A549 (cell line): ENCODE measurements at regions of chr12 and their contacts with region 1.

Region 1: GRCh38 chr12:62793256-62794217 is 141.4 kb downstream of the PPM1H start:
- DNase-seq: peak; percentile 84 to 96
- ATAC-seq: peak; percentile 93 to 96
- H3K4me3 ChIP-seq: 0 out of 3 replicates have a peak overlapping the region, but pooled peaks have one; percentile 2
- H3K27ac ChIP-seq: peak overlapping the region; percentile 91 to 94
- H3K4me1 ChIP-seq: peaks cover 42% of the 10 kb centered on the region
- CTCF ChIP-seq: peak; percentile 98
- EP300 ChIP-seq: peak in 1 of 2 experiments; percentile 37; a peak in 2 of 5 replicates
- POLR2A ChIP-seq: no peak
- RAD21 ChIP-seq: peak; percentile 99 to 100

Region 2: GRCh38 chr12:62522984-62523383 is 270.6 kb before region 1 on chr12:
- CTCF ChIA-PET with region 1: interaction called, 14 read pairs
- POLR2A ChIA-PET with region 1: no interaction called
- DNase-seq: peak in 1 of 2 experiments; percentile 48
- ATAC-seq: peak; percentile 62 to 66; a peak in 5 of 6 replicates
- H3K4me3 ChIP-seq: no peak overlapping the region
- H3K27ac ChIP-seq: no peak overlapping the region
- H3K4me1 ChIP-seq: peaks cover 45% of the 10 kb centered on the region
- CTCF ChIP-seq: peak; percentile 47
- EP300 ChIP-seq: no peak
- POLR2A ChIP-seq: no peak
- RAD21 ChIP-seq: peak; percentile 52 to 63

Region 3: DNA sequence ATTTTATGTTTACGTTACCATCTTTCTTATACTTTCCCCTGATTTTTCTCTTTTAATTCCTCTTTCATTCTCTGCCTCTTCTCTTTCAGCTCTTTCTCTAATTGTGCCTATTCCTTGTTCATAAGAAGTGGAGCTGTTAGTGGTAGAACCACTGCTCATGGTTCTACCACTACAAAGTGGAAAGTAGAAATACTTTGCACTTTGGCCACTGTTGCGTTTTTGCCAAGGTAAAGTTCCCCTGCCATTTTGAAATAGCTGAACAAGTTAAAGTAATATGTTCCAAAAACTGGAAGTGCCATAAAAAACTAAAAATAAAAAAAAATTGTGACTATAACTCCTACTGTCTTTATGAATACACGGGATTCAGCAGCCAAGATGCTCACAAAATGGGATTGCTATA is 196.3 kb before region 1 on chr12:
- CTCF ChIA-PET with region 1: interaction called, 23 read pairs
- POLR2A ChIA-PET with region 1: no interaction called
- DNase-seq: no peak
- ATAC-seq: no peak
- H3K4me3 ChIP-seq: no peak overlapping the region
- H3K27ac ChIP-seq: no peak overlapping the region
- H3K4me1 ChIP-seq: peaks cover 29% of the 10 kb centered on the region
- CTCF ChIP-seq: no peak
- EP300 ChIP-seq: no peak
- POLR2A ChIP-seq: no peak
- RAD21 ChIP-seq: no peak

Region 4: DNA sequence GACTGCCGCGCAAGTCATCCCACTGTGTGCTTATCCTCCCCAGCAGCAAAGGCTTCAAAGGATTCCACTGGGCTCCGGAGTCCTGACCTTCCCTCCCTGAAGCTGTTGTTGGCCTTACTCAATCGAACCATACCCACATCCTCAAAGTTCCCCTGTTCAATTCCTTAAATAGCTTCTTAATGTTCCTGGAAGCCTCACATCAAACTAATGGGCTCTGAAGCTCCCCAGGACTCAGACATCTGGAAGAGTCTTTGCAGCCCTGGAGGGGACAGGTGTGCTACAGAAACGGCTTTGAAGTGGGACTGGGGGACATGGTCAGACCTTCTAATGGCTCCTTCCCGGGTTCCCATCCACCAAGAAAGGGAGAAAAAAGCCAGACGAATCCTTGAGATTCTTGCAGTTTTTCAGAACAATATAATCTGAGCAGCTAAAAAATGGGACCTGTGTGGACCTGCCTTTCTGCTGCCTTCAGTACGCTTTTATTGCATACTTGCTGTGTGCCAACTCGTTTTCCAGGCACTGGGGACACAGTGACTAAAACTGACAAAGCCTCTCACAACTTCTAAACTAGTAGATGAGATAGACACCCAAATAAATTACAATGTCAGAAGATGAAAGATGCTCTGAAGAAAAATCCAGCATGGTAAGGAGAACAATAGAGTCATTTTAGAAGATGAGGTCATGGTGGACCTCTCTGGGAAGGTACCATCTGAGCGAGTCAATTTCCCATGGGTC is 122.4 kb before region 1 on chr12:
- CTCF ChIA-PET with region 1: interaction called, 10 read pairs
- POLR2A ChIA-PET with region 1: no interaction called
- DNase-seq: no peak
- ATAC-seq: no peak
- H3K4me3 ChIP-seq: no peak overlapping the region
- H3K27ac ChIP-seq: no peak overlapping the region
- H3K4me1 ChIP-seq: no peaks in the 10 kb centered on the region
- CTCF ChIP-seq: no peak
- EP300 ChIP-seq: no peak
- POLR2A ChIP-seq: no peak
- RAD21 ChIP-seq: no peak

Region 5: GRCh38 chr12:62757048-62757447 is 36.5 kb before region 1 on chr12:
- CTCF ChIA-PET with region 1: interaction called, 11 read pairs
- POLR2A ChIA-PET with region 1: no interaction called
- DNase-seq: no peak
- ATAC-seq: no peak
- H3K4me3 ChIP-seq: no peak overlapping the region
- H3K27ac ChIP-seq: peak overlapping the region; percentile 87 to 93; a peak in 4 of 6 replicates
- H3K4me1 ChIP-seq: peaks cover 59% of the 10 kb centered on the region
- CTCF ChIP-seq: no peak
- EP300 ChIP-seq: no peak
- POLR2A ChIP-seq: no peak
- RAD21 ChIP-seq: no peak

Region 6: DNA sequence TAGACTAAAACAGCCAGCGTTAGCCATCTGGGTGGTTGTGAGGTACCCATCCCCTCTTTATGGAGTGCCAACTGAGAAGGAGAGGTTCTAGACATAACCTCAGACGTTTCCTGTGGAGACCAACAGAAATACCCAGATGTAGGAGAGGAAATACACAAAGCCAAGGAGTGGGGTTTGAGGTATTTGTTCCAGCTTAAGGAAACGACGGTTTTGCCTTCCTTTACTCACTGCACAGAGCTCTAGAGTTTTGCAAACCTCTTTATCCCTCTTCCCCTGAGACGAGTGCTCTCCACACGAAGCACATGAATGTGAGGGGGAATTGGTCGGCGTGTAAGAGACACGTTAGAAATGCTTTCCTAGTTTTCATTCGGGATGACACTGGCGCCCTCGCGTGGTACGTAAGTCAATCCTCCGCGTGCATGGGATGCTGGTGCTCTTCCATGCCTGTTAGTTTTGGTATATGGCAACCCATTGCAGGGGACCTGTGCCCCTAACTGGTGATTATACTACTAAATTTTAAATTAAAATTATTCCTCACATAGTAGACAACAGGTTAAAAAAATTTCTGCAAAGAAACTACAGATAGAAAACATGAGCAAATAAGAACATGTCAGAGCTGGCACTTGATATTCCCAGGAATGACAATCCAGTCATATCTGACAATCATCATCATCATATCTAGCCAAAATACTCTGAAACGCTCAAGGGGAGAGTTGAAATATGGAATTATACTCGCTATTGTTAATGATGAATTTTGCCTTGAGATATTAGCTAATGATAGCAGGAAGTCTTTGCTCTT is 19.7 kb after region 1 on chr12:
- CTCF ChIA-PET with region 1: interaction called, 17 read pairs
- POLR2A ChIA-PET with region 1: no interaction called
- DNase-seq: peak; percentile 58 to 83
- ATAC-seq: peak; percentile 92 to 95
- H3K4me3 ChIP-seq: no peak overlapping the region; the same call in 2 of the 3 replicates
- H3K27ac ChIP-seq: peak overlapping the region; percentile 51 to 76; a peak in 5 of 6 replicates
- H3K4me1 ChIP-seq: peaks cover 5% of the 10 kb centered on the region; the same call in 2 of the 3 replicates
- CTCF ChIP-seq: peak; percentile 89
- EP300 ChIP-seq: no peak
- POLR2A ChIP-seq: no peak
- RAD21 ChIP-seq: peak; percentile 89 to 93

Region 7: GRCh38 chr12:62882696-62883095 is 89.2 kb after region 1 on chr12:
- CTCF ChIA-PET with region 1: no interaction called
- POLR2A ChIA-PET with region 1: no interaction called
- DNase-seq: no peak
- ATAC-seq: no peak
- H3K4me3 ChIP-seq: no peak overlapping the region
- H3K27ac ChIP-seq: no peak overlapping the region
- H3K4me1 ChIP-seq: no peaks in the 10 kb centered on the region
- CTCF ChIP-seq: no peak
- EP300 ChIP-seq: no peak
- POLR2A ChIP-seq: no peak
- RAD21 ChIP-seq: no peak

Region 8: DNA sequence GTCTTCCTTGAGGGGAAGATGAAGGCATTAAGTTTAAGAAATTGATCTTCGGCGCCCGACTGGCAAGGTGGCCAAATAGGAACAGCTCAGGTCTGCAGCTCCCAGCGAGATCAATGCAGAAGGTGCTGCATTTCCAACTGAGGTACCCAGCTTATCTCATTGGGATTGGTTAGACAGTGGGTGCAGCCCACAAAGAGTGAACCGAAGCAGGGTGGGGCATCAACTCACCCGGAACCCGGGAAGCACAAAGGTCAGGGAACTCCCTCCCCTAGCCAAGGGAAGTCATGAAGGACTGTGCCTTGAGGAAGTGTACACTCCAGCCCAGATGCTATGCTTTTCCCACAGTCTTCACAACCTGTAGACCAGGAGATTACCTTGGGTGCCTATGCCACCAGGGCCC is 402.6 kb after region 1 on chr12:
- CTCF ChIA-PET with region 1: no interaction called
- POLR2A ChIA-PET with region 1: no interaction called
- DNase-seq: no peak
- ATAC-seq: no peak
- H3K4me3 ChIP-seq: no peak overlapping the region
- H3K27ac ChIP-seq: no peak overlapping the region
- H3K4me1 ChIP-seq: no peaks in the 10 kb centered on the region
- CTCF ChIP-seq: no peak
- EP300 ChIP-seq: no peak
- POLR2A ChIP-seq: no peak
- RAD21 ChIP-seq: no peak